OCI-LY7 (cell line): ENCODE measurements at regions of chr4 and their contacts with region 1.

Region 1: DNA sequence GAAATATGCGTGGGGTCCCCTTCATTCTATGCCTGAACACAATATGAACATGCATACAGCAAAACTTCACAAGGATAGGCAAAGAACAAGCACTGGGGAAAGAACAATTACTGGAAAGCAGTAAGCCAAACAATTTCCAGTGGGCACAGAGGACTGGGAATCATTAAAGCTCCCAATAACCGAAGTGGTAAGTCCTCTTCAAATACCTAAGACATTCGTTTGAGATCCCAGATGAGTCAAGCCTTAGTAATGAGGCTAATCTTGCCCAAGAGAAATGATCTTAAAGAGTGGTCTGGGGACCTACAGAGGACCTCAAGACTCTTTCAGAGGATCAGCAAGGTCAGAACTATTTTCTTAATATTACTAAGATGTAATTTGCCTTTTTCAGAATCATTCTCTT is 28.6 kb downstream of the ANAPC10 start:
- DNase-seq: no peak
- H3K4me3 ChIP-seq: no peak overlapping the region
- H3K27ac ChIP-seq: no peak overlapping the region
- H3K4me1 ChIP-seq: no peaks in the 10 kb centered on the region
- CTCF ChIP-seq: no peak

Region 2: DNA sequence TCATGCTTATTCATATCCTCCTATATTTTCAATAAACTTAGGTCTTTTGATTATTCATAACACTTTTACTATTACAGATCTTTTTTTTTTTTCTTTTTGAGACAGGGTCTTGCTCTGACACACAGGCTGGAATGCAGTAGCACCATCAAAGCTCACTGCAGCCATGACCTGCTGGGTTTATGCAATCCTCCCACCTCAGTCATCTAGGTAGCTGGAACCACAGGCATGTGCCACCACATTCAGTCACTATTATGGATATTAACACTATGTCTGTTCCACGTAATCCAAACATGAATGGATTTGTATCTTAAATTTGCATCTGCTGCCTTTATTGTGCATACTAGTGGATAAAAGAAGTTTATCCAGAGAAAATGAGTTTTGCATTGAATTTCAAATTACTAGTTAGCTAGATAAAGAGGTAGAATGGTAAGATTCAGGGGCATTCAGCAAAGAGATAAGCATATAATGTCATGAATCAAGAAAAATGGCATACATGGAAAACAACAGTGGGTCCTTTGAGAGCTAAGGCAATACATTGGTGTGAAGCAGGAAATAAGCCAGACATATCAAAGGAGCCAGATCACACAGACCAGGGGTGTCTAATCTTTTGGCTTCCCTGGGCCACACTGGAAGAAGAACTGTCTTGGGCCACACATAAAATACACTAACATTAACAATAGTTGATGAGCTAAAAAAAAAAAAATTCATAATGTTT is 14.7 kb after region 1 on chr4:
- CTCF ChIA-PET with region 1: no interaction called
- POLR2A ChIA-PET with region 1: interaction called, 12 read pairs
- intact Hi-C with region 1: no loop called
- DNase-seq: no peak
- H3K4me3 ChIP-seq: no peak overlapping the region
- H3K27ac ChIP-seq: no peak overlapping the region
- H3K4me1 ChIP-seq: no peaks in the 10 kb centered on the region
- CTCF ChIP-seq: no peak